ENCODE measurements at regions of chr6 and their contacts with region 1.

Region 1: GRCh38 chr6:119078376-119079282 is at the start of gene FAM184A:
- DNase-seq: peak; percentile 61
- ATAC-seq: peak; percentile 83
- H3K4me3 Mint-ChIP-seq: peak within 1 kb of the TSS; percentile 93
- H3K27ac Mint-ChIP-seq: no peak within 1 kb of the TSS
- H3K4me1 Mint-ChIP-seq: peaks cover 17% of the 10 kb centered on the region
- H3K27me3 Mint-ChIP-seq: peaks cover 16% of the 10 kb centered on the region
- CTCF ChIP-seq: no peak
- total RNA-seq, gene FAM184A: 0.24 and 1.1 TPM in 2 replicates

Region 2: GRCh38 chr6:118934461-118935330 is 143.9 kb before region 1 on chr6 and contains the start of gene MCM9:
- CTCF ChIA-PET with region 1: interaction called, 3 read pairs
- POLR2A ChIA-PET with region 1: interaction called, 3 read pairs
- intact Hi-C with region 1: loop called (anchors 2 kb)
- DNase-seq: peak; percentile 90
- ATAC-seq: peak; percentile 92
- H3K4me3 Mint-ChIP-seq: peak within 1 kb of the TSS; percentile 89
- H3K27ac Mint-ChIP-seq: peak within 1 kb of the TSS; percentile 91
- H3K4me1 Mint-ChIP-seq: peaks cover 32% of the 10 kb centered on the region
- H3K27me3 Mint-ChIP-seq: no peaks in the 10 kb centered on the region
- CTCF ChIP-seq: no peak
- total RNA-seq, gene MCM9: 33.3 and 37.0 TPM in 2 replicates

Measured in activated B cell treated with CpG ODN at 0.5 μM for 24 hours (primary cell).